ENCODE measurements at regions of chr1 and their contacts with region 1.

Region 1: GRCh38 chr1:179365320-179366092 is at the start of gene AXDND1:
- DNase-seq: peak; percentile 80 to 96 (median 94)
- ATAC-seq: peak; percentile 95
- H3K4me3 ChIP-seq: peak within 1 kb of the TSS; percentile 91
- H3K4me3 Mint-ChIP-seq: peak within 1 kb of the TSS; percentile 82 to 99 (median 94)
- H3K27ac ChIP-seq: peak within 1 kb of the TSS; percentile 91
- H3K27ac Mint-ChIP-seq: peak within 1 kb of the TSS; percentile 99 to 100 (median 100)
- H3K4me1 ChIP-seq: peaks cover 5 to 8% of the 10 kb centered on the region in 2 donors
- H3K4me1 Mint-ChIP-seq: peaks cover 4 to 21% (median 14%) of the 10 kb centered on the region in 7 donors
- H3K27me3 ChIP-seq: no peaks in the 10 kb centered on the region
- H3K27me3 Mint-ChIP-seq: peaks cover 0 to 10% (median 0%) of the 10 kb centered on the region in 5 donors
- total RNA-seq, gene AXDND1: 0.98 to 2.3 (median 1.3) TPM in 3 of 5 experiments, not detected in the others

Region 2: GRCh38 chr1:178725603-178726517 is 639.6 kb before region 1 on chr1:
- CTCF ChIA-PET with region 1: no interaction called
- POLR2A ChIA-PET with region 1: no interaction called
- intact Hi-C with region 1: loop called (anchors 1 to 2 kb)
- DNase-seq: peak; percentile 25 to 83 (median 73)
- ATAC-seq: peak; percentile 85
- H3K4me3 ChIP-seq: peak overlapping the region; percentile 93
- H3K4me3 Mint-ChIP-seq: peak overlapping the region; percentile 79 to 96 (median 88)
- H3K27ac ChIP-seq: peak overlapping the region; percentile 86
- H3K27ac Mint-ChIP-seq: peak overlapping the region; percentile 14 to 95 (median 88)
- H3K4me1 ChIP-seq: peaks cover 0 to 5% of the 10 kb centered on the region in 2 donors
- H3K4me1 Mint-ChIP-seq: peaks cover 11 to 39% (median 27%) of the 10 kb centered on the region in 7 donors
- H3K27me3 ChIP-seq: no peaks in the 10 kb centered on the region
- H3K27me3 Mint-ChIP-seq: peaks cover 0 to 29% (median 0%) of the 10 kb centered on the region in 5 donors

Region 3: GRCh38 chr1:179081687-179082332 is 283.7 kb before region 1 on chr1 and contains the start of gene TOR3A:
- CTCF ChIA-PET with region 1: interaction called, 18 read pairs
- POLR2A ChIA-PET with region 1: interaction called, 11 read pairs
- intact Hi-C with region 1: loop called (anchors 1 kb)
- DNase-seq: peak; percentile 51 to 82 (median 58)
- ATAC-seq: peak; percentile 80
- H3K4me3 ChIP-seq: peak within 1 kb of the TSS; percentile 93
- H3K4me3 Mint-ChIP-seq: peak within 1 kb of the TSS; percentile 91 to 100 (median 95)
- H3K27ac ChIP-seq: peak within 1 kb of the TSS; percentile 76
- H3K27ac Mint-ChIP-seq: peak within 1 kb of the TSS; percentile 84 to 99 (median 95)
- H3K4me1 ChIP-seq: peaks cover 4 to 11% of the 10 kb centered on the region in 2 donors
- H3K4me1 Mint-ChIP-seq: peaks cover 14 to 38% (median 25%) of the 10 kb centered on the region in 7 donors
- H3K27me3 ChIP-seq: no peaks in the 10 kb centered on the region
- H3K27me3 Mint-ChIP-seq: no peaks in the 10 kb centered on the region
- total RNA-seq, gene TOR3A: 18.8 to 43.8 (median 21.7) TPM

Region 4: DNA sequence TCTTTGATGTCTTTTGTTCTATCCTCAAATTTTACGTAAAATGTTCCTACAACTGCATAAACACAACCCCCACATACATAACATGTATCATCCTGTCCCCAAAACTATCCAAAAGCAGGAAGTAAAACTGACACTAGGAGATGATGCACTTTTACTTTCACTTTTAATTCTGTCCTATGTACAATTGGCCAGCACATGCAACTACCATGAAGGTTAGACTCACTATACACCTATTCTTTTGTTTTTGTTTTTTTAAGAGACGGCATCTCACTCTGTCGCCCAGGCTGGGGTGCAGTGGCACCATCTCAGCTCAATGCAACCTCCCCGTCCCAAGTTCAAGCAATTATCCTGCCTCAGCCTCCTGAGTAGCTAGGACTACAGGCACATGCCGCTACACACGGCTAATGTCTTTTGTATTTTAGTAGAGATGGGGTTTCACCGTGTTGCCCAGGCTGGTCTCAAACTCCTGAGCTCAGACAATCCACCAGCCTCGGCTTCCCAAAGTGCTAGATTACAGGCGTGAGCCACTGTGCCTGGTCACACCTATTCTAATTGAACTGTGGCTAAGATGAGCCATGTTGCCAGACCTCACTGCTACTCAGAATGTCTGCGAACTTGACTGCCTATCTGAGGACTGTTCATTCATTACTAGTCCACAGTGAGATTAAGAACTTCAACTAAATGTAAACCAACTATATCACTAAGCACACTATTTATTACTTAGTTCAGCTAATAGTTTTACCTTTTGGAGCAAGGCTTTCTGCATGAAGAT is 235.6 kb before region 1 on chr1:
- CTCF ChIA-PET with region 1: interaction called, 6 read pairs
- POLR2A ChIA-PET with region 1: interaction called, 4 read pairs
- intact Hi-C with region 1: loop called (anchors 1 to 2 kb)
- DNase-seq: peak in 8 of 9 donors; percentile 28 to 83 (median 72)
- ATAC-seq: peak; percentile 95
- H3K4me3 ChIP-seq: peak overlapping the region; percentile 38
- H3K4me3 Mint-ChIP-seq: peak overlapping the region; percentile 63 to 93 (median 80)
- H3K27ac ChIP-seq: peak overlapping the region; percentile 79
- H3K27ac Mint-ChIP-seq: peak overlapping the region; percentile 87 to 96 (median 94)
- H3K4me1 ChIP-seq: peaks cover 4 to 17% of the 10 kb centered on the region in 2 donors
- H3K4me1 Mint-ChIP-seq: peaks cover 3 to 33% (median 22%) of the 10 kb centered on the region in 7 donors
- H3K27me3 ChIP-seq: no peaks in the 10 kb centered on the region
- H3K27me3 Mint-ChIP-seq: no peaks in the 10 kb centered on the region

Region 5: DNA sequence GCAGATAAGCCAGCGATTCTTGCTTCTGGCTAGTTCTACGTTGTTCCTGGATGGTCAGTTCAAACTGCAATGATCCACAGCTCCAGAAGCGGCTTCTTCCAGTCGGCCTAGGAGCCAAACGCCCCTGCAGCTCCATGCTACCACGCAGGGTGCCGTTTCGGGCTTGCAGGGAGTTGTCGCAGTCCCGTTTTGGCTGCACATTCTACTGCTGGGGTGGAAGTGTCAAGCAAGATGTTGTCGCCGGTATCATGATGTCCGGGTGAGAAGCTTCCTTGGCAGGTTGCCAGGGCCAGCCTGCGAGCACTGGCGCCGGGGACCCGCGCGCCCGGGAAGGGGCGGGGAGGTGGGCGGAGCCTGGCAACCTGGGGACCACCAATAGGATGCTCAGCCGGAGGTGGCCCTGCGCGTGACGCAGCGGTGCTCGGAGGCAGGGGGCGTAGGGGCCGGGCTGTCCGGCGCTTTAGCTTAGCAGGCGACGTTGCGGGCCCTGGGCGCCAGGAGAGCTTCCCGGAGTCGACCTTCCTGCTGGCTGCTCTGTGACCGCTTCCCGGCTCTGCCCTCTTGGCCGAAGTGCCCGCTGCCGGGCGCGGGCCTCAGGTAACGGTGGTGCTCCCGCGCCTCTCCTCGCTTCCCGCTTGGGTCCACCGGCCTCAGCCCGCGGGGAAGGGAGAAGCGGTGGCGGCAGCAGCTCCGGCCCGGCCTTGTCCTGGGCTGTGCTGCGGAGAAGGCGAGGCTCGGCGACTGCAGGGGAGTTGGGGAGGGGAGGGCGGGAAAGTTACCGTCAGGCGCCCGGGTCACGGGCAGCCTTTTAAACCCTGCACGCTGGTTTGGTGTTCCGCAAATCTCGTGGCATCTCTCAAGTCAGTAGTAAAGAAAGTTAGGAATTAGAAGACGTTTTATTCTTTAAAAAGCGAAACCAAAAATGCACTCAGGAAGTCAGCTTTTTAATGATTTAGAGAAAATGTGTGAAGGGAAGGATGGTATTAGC is 71.9 kb before region 1 on chr1 and contains the start of gene SOAT1:
- CTCF ChIA-PET with region 1: interaction called, 11 read pairs
- POLR2A ChIA-PET with region 1: interaction called, 18 read pairs
- intact Hi-C with region 1: loop called (anchors 1 kb)
- DNase-seq: peak; percentile 85 to 94 (median 90)
- ATAC-seq: peak; percentile 98
- H3K4me3 ChIP-seq: peak within 1 kb of the TSS; percentile 78
- H3K4me3 Mint-ChIP-seq: peak within 1 kb of the TSS; percentile 83 to 97 (median 92)
- H3K27ac ChIP-seq: peak within 1 kb of the TSS; percentile 96
- H3K27ac Mint-ChIP-seq: peak within 1 kb of the TSS; percentile 79 to 97 (median 93)
- H3K4me1 ChIP-seq: peaks cover 21 to 33% of the 10 kb centered on the region in 2 donors
- H3K4me1 Mint-ChIP-seq: peaks cover 28 to 51% (median 45%) of the 10 kb centered on the region in 7 donors
- H3K27me3 ChIP-seq: no peaks in the 10 kb centered on the region
- H3K27me3 Mint-ChIP-seq: no peaks in the 10 kb centered on the region
- total RNA-seq, gene SOAT1: 40.6 to 52.8 (median 45.0) TPM

Region 6: GRCh38 chr1:179474713-179475112 is 109.2 kb after region 1 on chr1:
- CTCF ChIA-PET with region 1: no interaction called
- POLR2A ChIA-PET with region 1: no interaction called
- intact Hi-C with region 1: no loop called
- DNase-seq: no peak
- ATAC-seq: no peak
- H3K4me3 ChIP-seq: no peak overlapping the region
- H3K4me3 Mint-ChIP-seq: no peak overlapping the region
- H3K27ac ChIP-seq: no peak overlapping the region
- H3K27ac Mint-ChIP-seq: no peak overlapping the region
- H3K4me1 ChIP-seq: no peaks in the 10 kb centered on the region
- H3K4me1 Mint-ChIP-seq: no peaks in the 10 kb centered on the region
- H3K27me3 ChIP-seq: no peaks in the 10 kb centered on the region
- H3K27me3 Mint-ChIP-seq: peaks cover 0 to 19% (median 10%) of the 10 kb centered on the region in 5 donors

Region 7: DNA sequence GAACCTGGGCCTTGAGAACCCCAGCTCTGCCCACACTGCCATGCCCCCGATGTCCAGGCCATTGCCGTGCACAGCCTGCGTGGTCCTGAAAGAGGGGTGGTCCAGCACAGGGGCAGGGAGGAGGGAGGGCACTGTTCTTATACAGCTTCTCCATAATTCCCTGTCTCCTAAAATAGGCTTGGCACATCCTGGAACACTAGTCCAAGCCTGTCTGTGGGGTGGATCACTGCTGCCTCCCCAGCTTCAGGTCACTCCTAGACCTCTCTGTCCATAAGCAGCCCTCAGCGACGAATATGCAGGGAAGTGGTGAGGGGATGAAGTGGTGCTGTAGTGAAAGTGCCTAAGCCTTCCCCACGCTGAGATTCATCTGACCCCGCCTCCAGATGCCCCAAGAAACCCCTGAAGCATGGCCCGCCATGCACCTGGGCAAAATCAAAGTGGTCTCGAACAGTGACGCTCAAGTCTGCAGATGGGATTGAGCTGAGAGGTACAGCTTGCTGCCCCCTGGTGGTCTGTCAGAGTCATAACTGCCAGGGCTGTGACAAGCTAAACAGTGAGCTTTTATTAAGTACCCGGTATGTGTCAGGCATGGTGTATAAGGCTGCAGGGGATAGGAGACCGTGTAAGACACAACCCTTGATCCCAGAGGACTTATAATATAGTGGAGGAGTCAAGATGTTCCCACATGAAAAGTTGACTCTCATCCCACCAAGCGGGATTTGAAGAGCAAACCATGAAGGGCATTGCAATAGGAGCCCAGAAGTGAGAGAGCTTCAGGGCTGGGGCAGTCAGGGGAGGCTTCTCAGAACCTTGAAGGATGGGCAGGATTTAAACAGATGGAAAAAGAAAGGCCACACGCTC is 444.2 kb after region 1 on chr1:
- CTCF ChIA-PET with region 1: no interaction called
- POLR2A ChIA-PET with region 1: no interaction called
- intact Hi-C with region 1: loop called in 1 of 2 experiments (anchors 1 kb)
- DNase-seq: peak; percentile 53 to 82 (median 78)
- ATAC-seq: peak; percentile 87
- H3K4me3 ChIP-seq: no peak overlapping the region
- H3K4me3 Mint-ChIP-seq: peak overlapping the region in 5 of 10 donors; percentile 20 to 46 (median 32)
- H3K27ac ChIP-seq: no peak overlapping the region
- H3K27ac Mint-ChIP-seq: peak overlapping the region in 6 of 9 donors; percentile 2 to 82 (median 26)
- H3K4me1 ChIP-seq: peaks cover 6 to 13% of the 10 kb centered on the region in 2 donors
- H3K4me1 Mint-ChIP-seq: peaks cover 1 to 13% (median 12%) of the 10 kb centered on the region in 7 donors
- H3K27me3 ChIP-seq: no peaks in the 10 kb centered on the region
- H3K27me3 Mint-ChIP-seq: peaks cover 0 to 6% (median 0%) of the 10 kb centered on the region in 5 donors

Region 8: GRCh38 chr1:180502360-180503273 is 1137.1 kb after region 1 on chr1 and contains the start of gene ACBD6:
- CTCF ChIA-PET with region 1: no interaction called
- POLR2A ChIA-PET with region 1: no interaction called
- intact Hi-C with region 1: loop called (anchors 2 to 5 kb)
- DNase-seq: peak; percentile 80 to 92 (median 89)
- ATAC-seq: peak; percentile 95
- H3K4me3 ChIP-seq: peak within 1 kb of the TSS; percentile 85
- H3K4me3 Mint-ChIP-seq: peak within 1 kb of the TSS; percentile 89 to 100 (median 97)
- H3K27ac ChIP-seq: peak within 1 kb of the TSS; percentile 79
- H3K27ac Mint-ChIP-seq: peak within 1 kb of the TSS; percentile 91 to 99 (median 98)
- H3K4me1 ChIP-seq: peaks cover 10 to 18% of the 10 kb centered on the region in 2 donors
- H3K4me1 Mint-ChIP-seq: peaks cover 17 to 55% (median 38%) of the 10 kb centered on the region in 7 donors
- H3K27me3 ChIP-seq: no peaks in the 10 kb centered on the region
- H3K27me3 Mint-ChIP-seq: peaks cover 0 to 5% (median 0%) of the 10 kb centered on the region in 5 donors
- total RNA-seq, gene ACBD6: 44.2 to 75.7 (median 47.3) TPM

Measured in naive thymus-derived CD4-positive, alpha-beta T cell (primary cell).